Calu3 (cell line): ENCODE measurements at regions of chr1 and their contacts with region 1.

Region 1: DNA sequence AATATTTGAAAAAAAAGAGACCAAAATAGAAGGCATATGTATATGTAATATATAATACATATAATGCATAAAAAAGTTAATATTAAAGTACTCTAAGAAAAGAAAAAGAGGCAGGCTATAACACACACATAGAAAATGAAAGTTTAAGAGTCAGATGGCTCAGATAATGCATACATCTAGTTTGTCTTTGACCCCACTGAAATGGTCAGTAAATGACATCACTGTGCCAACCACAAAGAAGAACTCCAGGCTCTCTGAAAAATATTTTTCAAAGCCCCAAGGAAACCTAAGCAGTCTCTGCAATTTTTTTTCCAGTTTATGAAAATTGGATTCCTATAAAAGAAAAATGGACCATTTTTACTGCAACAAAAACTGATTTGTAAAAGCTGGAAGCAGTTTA is 55.4 kb upstream of the SCYL3 start:
- DNase-seq: no peak
- H3K4me3 Mint-ChIP-seq: no peak overlapping the region
- H3K27ac Mint-ChIP-seq: no peak overlapping the region
- H3K4me1 Mint-ChIP-seq: no peaks in the 10 kb centered on the region
- H3K27me3 Mint-ChIP-seq: no peaks in the 10 kb centered on the region
- CTCF ChIP-seq: no peak

Region 2: GRCh38 chr1:169893494-169894362 is 55.4 kb before region 1 on chr1 and contains the start of gene SCYL3:
- CTCF ChIA-PET with region 1: no interaction called
- intact Hi-C with region 1: no loop called
- DNase-seq: peak; percentile 93
- H3K4me3 Mint-ChIP-seq: peak within 1 kb of the TSS; percentile 86
- H3K27ac Mint-ChIP-seq: peak within 1 kb of the TSS; percentile 100
- H3K4me1 Mint-ChIP-seq: peaks cover 49% of the 10 kb centered on the region
- H3K27me3 Mint-ChIP-seq: no peaks in the 10 kb centered on the region
- CTCF ChIP-seq: no peak
- total RNA-seq, gene SCYL3: 17.9 and 18.3 TPM in 2 replicates

Region 3: DNA sequence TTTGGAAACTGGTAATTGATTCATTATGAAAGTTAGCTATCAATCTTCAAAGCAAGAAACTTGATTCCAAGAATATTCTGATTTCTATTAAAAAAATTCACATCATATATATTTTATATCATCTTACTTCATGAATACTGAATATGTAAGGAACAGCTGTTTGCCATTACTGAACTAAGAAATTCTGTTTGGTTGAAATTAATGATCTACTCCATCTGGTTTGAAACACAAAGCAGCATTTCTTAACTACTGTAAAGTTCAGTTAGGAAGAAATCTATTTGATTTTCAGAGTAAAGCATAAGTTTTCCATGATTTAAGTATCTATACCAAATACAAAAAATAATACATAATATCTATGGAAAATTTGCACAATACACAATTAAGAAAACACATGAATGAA is 10.5 kb after region 1 on chr1:
- CTCF ChIA-PET with region 1: no interaction called
- intact Hi-C with region 1: loop called (anchors 1 kb)
- DNase-seq: no peak
- H3K4me3 Mint-ChIP-seq: no peak overlapping the region
- H3K27ac Mint-ChIP-seq: no peak overlapping the region
- H3K4me1 Mint-ChIP-seq: no peaks in the 10 kb centered on the region
- H3K27me3 Mint-ChIP-seq: no peaks in the 10 kb centered on the region
- CTCF ChIP-seq: no peak